Heart left ventricle (tissue), 16 donors: ENCODE measurements at regions of chr4 and their contacts with region 1.

Region 1: DNA sequence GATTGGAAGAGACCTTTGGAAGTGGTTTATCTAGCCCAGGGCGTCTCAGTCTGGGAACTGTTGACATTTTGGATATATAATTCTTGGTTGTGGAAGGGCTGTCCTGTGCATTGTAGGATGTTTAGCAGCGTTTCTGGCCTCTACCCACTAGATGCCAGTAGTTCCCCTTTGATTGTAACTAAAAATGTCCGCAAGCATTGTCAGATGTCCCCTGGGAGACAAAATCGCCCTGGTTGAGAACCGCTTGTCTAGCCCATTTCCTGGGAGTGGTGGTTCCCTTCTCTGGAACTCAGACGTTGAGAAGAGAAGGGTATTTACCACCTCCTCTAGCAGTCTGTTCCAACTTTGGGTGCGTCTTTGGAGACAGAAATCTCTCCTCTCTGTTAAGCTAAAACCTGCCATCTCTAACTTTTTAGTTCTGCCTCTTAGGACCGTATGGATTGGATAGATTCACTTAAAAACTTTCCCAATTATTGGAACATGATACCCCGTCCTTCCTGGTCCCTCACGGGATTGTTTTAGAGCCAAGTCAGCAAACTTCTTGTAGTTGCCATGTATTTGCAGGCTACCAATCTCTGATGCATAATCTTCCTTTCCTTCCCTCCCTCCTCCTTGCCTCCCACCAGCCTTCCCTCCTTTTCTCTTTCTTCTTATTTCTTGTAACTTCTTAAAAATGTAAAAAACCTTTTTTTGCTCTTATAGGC is 13.9 kb downstream of the TMEM165 start:
- DNase-seq: peak in 4 of 5 donors; percentile 38 to 50 (median 44)
- ATAC-seq: peak; percentile 55 to 76 (median 72)
- H3K4me3 ChIP-seq: peak overlapping the region in 4 of 12 donors; percentile 4 to 22 (median 8)
- H3K27ac ChIP-seq: peak overlapping the region in 9 of 12 donors; percentile 8 to 45 (median 21)
- H3K4me1 ChIP-seq: peaks cover 9 to 65% (median 22%) of the 10 kb centered on the region in 12 donors
- H3K27me3 ChIP-seq: no peaks in the 10 kb centered on the region
- CTCF ChIP-seq: peak in 11 of 12 donors; percentile 14 to 58 (median 39)
- POLR2A ChIP-seq: no peak

Region 2: GRCh38 chr4:54863571-54864255 is 545.9 kb before region 1 on chr4:
- intact Hi-C with region 1: no loop called
- DNase-seq: no peak
- ATAC-seq: no peak
- H3K4me3 ChIP-seq: no peak overlapping the region
- H3K27ac ChIP-seq: no peak overlapping the region
- H3K4me1 ChIP-seq: peaks cover 0 to 7% (median 0%) of the 10 kb centered on the region in 12 donors
- H3K27me3 ChIP-seq: no peaks in the 10 kb centered on the region
- CTCF ChIP-seq: no peak
- POLR2A ChIP-seq: no peak

Region 3: GRCh38 chr4:54986095-54986846 is 423.3 kb before region 1 on chr4:
- intact Hi-C with region 1: no loop called
- DNase-seq: no peak
- ATAC-seq: no peak
- H3K4me3 ChIP-seq: no peak overlapping the region
- H3K27ac ChIP-seq: no peak overlapping the region
- H3K4me1 ChIP-seq: no peaks in the 10 kb centered on the region
- H3K27me3 ChIP-seq: no peaks in the 10 kb centered on the region
- CTCF ChIP-seq: no peak
- POLR2A ChIP-seq: no peak

Region 4: DNA sequence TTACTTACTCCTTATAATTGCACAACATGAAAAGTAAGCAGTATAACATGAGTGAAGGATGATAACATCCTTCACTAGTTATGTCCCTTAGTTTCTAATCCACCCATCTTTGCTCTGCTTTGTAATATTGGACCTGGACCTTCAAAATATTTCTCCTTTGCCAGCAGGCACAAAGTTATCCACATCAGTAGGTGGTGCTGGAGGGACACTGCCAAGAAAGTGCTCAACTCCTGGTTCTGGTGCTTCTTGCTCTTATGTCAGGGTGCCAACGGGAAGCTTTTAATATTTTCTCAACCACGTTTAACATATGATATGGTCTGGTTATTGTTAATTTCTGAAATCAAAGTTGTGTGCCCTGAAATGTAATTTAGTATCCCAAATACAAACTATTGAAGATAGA is 35.2 kb after region 1 on chr4:
- intact Hi-C with region 1: loop called in 1 of 10 experiments (anchors 5 kb)
- DNase-seq: no peak
- ATAC-seq: peak in 1 of 4 donors; percentile 42
- H3K4me3 ChIP-seq: no peak overlapping the region
- H3K27ac ChIP-seq: no peak overlapping the region
- H3K4me1 ChIP-seq: peaks cover 0 to 5% (median 0%) of the 10 kb centered on the region in 12 donors
- H3K27me3 ChIP-seq: no peaks in the 10 kb centered on the region
- CTCF ChIP-seq: peak in 7 of 12 donors; percentile 9 to 28 (median 11)
- POLR2A ChIP-seq: no peak